ENCODE measurements at regions of chr11 and their contacts with region 1.

Region 1: DNA sequence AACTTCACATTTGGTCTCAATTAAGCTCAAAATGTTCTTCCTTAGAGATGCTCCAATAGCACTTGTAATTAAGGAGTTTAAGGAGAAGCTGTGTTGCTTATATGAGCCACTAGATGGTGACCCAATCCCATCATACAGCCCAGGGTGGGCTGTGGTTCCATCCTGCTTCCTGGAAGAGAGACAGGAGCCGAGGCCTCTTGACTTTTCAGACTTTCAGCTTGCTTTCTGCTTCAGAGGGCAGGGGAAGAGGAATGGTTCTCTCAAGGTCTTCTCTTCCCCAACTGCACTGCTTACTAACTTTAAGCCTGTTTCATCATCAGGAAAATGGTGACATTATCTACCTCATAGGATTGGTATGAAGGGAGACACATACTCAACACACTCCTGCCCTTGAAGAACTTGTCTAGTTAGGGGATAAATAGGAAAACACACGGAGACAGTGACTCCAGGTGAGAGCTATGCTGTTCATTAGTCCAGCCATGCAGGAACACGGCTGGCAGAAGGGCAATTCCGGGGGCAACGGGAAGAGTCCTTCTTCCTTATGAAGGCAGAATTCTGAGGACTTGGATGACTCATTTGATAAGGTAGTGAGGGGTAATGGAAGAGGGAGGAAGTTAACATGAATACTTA is 20.1 kb downstream of the TMEM218 start:
- DNase-seq: peak; percentile 77
- ATAC-seq: peak; percentile 94
- H3K4me3 ChIP-seq: no peak overlapping the region
- H3K27ac ChIP-seq: peak overlapping the region; percentile 15; the same call in 1 of the 2 replicates
- H3K4me1 ChIP-seq: peaks cover 10% of the 10 kb centered on the region
- H3K27me3 ChIP-seq: no peaks in the 10 kb centered on the region
- CTCF ChIP-seq: peak; percentile 77
- POLR2A ChIP-seq: no peak
- RAD21 ChIP-seq: peak; percentile 85

Region 2: DNA sequence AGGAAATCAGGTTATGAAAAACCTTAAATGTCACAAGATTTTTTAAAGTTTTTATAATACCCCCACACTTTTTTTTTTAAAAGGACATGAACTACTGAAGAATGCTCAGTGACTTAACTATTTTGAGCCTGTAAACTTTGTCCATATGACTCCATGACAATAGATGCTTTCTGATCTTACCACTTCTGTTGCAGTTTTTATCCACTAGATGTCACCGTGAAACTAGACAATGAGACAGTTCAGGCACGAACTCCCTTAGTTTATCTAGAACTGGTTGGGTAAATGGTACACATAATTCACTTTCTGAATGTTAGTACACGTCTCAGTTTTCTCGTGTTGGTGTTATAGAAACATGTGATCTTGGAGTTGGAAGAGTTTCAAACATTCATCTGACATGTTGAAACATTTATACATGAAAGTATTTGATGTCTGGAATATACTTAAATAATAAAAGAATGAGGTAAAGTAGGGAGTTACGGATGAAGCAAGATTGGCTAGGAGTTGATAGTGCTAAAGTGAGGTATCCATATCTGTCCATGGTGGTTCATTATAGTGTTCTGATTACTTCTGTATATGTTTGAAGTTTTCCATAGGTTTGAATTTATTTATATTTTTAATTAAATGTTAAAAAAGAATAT is 129.3 kb before region 1 on chr11:
- CTCF ChIA-PET with region 1: no interaction called
- POLR2A ChIA-PET with region 1: no interaction called
- dilution Hi-C with region 1: no loop called
- in situ Hi-C with region 1: no loop called
- intact Hi-C with region 1: loop called (anchors 2 kb)
- DNase-seq: peak; percentile 85
- ATAC-seq: peak; percentile 100
- H3K4me3 ChIP-seq: no peak overlapping the region
- H3K27ac ChIP-seq: no peak overlapping the region
- H3K4me1 ChIP-seq: no peaks in the 10 kb centered on the region
- H3K27me3 ChIP-seq: no peaks in the 10 kb centered on the region
- CTCF ChIP-seq: peak; percentile 91
- POLR2A ChIP-seq: peak; percentile 43; the same call in 1 of the 2 replicates
- RAD21 ChIP-seq: peak; percentile 95

Region 3: GRCh38 chr11:125053167-125053566 is 38.2 kb before region 1 on chr11:
- CTCF ChIA-PET with region 1: no interaction called
- POLR2A ChIA-PET with region 1: no interaction called
- dilution Hi-C with region 1: no loop called
- in situ Hi-C with region 1: no loop called
- intact Hi-C with region 1: no loop called
- DNase-seq: no peak
- ATAC-seq: no peak
- H3K4me3 ChIP-seq: no peak overlapping the region
- H3K27ac ChIP-seq: no peak overlapping the region
- H3K4me1 ChIP-seq: no peaks in the 10 kb centered on the region
- H3K27me3 ChIP-seq: no peaks in the 10 kb centered on the region
- CTCF ChIP-seq: no peak
- POLR2A ChIP-seq: no peak
- RAD21 ChIP-seq: no peak

Region 4: GRCh38 chr11:125110506-125110905 is 19.1 kb after region 1 on chr11:
- CTCF ChIA-PET with region 1: no interaction called
- POLR2A ChIA-PET with region 1: interaction called, 3 read pairs
- dilution Hi-C with region 1: no loop called
- in situ Hi-C with region 1: no loop called
- intact Hi-C with region 1: loop called (anchors 1 kb)
- DNase-seq: no peak
- ATAC-seq: no peak
- H3K4me3 ChIP-seq: no peak overlapping the region
- H3K27ac ChIP-seq: no peak overlapping the region
- H3K4me1 ChIP-seq: peaks cover 7% of the 10 kb centered on the region
- H3K27me3 ChIP-seq: no peaks in the 10 kb centered on the region
- CTCF ChIP-seq: no peak
- POLR2A ChIP-seq: no peak
- RAD21 ChIP-seq: no peak

Region 5: GRCh38 chr11:125141686-125142535 is 50.5 kb after region 1 on chr11:
- CTCF ChIA-PET with region 1: interaction called, 34 read pairs
- POLR2A ChIA-PET with region 1: interaction called, 4 read pairs
- dilution Hi-C with region 1: no loop called
- in situ Hi-C with region 1: no loop called
- intact Hi-C with region 1: loop called (anchors 1 kb)
- DNase-seq: peak; percentile 29
- ATAC-seq: peak; percentile 100
- H3K4me3 ChIP-seq: no peak overlapping the region
- H3K27ac ChIP-seq: no peak overlapping the region
- H3K4me1 ChIP-seq: no peaks in the 10 kb centered on the region; the same call in 1 of the 2 replicates
- H3K27me3 ChIP-seq: peaks cover 13% of the 10 kb centered on the region
- CTCF ChIP-seq: peak; percentile 83
- POLR2A ChIP-seq: 0 out of 2 replicates have a peak, but pooled peaks have one; percentile 29
- RAD21 ChIP-seq: peak; percentile 82

Region 6: DNA sequence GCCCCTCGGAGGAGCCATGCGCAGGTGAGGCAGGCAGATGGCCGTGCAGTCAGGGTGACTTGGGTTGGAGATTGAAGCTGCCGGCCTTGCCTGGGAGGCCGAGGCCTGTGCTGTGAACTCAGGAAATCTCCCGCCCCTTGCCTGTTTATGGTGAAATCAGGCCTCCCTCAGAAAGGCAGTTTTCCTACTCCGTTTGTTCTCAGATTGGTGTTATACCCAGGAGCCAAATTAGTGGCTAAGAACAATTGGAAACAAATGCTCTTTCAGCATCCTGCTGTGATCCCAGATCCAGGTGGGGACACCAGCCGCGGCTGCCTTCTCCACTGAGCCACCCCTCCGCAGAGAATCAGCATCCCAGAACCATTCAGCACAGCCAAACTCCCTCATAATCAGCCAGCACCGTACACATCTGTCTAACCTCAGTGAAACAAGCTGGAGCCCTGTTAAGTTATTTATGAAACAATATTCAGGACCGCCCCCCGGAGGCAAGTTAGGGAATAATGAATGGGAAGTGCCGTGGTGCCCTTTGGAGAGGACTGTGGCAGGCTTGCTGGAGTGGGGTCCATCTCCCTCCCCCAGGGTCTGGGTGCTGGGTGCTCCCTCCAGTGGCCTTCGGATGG is 133.1 kb after region 1 on chr11:
- CTCF ChIA-PET with region 1: no interaction called
- POLR2A ChIA-PET with region 1: no interaction called
- dilution Hi-C with region 1: no loop called
- in situ Hi-C with region 1: no loop called
- intact Hi-C with region 1: loop called (anchors 1 kb)
- DNase-seq: peak; percentile 23
- ATAC-seq: peak; percentile 81
- H3K4me3 ChIP-seq: no peak overlapping the region
- H3K27ac ChIP-seq: no peak overlapping the region
- H3K4me1 ChIP-seq: no peaks in the 10 kb centered on the region
- H3K27me3 ChIP-seq: peaks cover 2% of the 10 kb centered on the region; the same call in 1 of the 2 replicates
- CTCF ChIP-seq: peak; percentile 36
- POLR2A ChIP-seq: no peak
- RAD21 ChIP-seq: peak; percentile 38; the same call in 1 of the 2 replicates

Region 7: GRCh38 chr11:125345421-125346178 is 254.2 kb after region 1 on chr11:
- CTCF ChIA-PET with region 1: interaction called, 11 read pairs
- POLR2A ChIA-PET with region 1: no interaction called
- dilution Hi-C with region 1: no loop called
- in situ Hi-C with region 1: no loop called
- intact Hi-C with region 1: loop called (anchors 1 kb)
- DNase-seq: peak; percentile 67
- ATAC-seq: peak; percentile 82
- H3K4me3 ChIP-seq: no peak overlapping the region
- H3K27ac ChIP-seq: no peak overlapping the region
- H3K4me1 ChIP-seq: peaks cover 2% of the 10 kb centered on the region; the same call in 1 of the 2 replicates
- H3K27me3 ChIP-seq: no peaks in the 10 kb centered on the region
- CTCF ChIP-seq: peak; percentile 89
- POLR2A ChIP-seq: no peak
- RAD21 ChIP-seq: peak; percentile 78

Region 8: DNA sequence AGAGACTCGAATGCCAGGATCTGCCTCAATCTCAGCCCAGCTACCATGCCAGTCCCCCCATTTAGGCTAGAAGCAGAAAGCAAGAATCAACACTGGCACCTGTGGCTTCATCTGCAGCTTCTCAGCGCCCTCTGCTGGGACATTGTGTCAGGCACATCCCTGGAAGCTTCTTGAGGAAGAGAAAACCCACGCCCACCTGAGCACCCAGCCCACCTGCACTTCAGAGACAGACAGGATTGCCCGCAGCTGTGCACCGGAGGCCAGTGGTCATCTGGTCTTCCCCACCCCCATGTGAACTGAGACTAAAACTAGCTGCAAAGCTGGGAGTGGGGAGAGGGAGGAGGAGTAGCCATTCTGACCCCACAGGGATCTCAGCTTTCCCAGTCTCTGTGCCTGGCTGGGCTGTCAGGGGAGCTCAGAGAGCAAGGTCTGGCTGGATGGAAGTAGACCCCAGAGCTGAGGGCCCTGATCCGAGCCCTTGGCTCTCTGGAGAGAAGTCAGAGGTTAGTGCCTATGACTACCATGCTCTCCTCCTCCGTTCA is 337.9 kb after region 1 on chr11:
- CTCF ChIA-PET with region 1: interaction called, 6 read pairs
- POLR2A ChIA-PET with region 1: no interaction called
- dilution Hi-C with region 1: no loop called
- in situ Hi-C with region 1: no loop called
- intact Hi-C with region 1: loop called (anchors 2 kb)
- DNase-seq: peak; percentile 55
- ATAC-seq: peak; percentile 78
- H3K4me3 ChIP-seq: no peak overlapping the region
- H3K27ac ChIP-seq: no peak overlapping the region
- H3K4me1 ChIP-seq: no peaks in the 10 kb centered on the region
- H3K27me3 ChIP-seq: peaks cover 10% of the 10 kb centered on the region
- CTCF ChIP-seq: peak; percentile 74
- POLR2A ChIP-seq: no peak
- RAD21 ChIP-seq: peak; percentile 75

Measured in IMR-90 (cell line).